ENCODE measurements at regions of chr1 and their contacts with region 1.

Region 1: DNA sequence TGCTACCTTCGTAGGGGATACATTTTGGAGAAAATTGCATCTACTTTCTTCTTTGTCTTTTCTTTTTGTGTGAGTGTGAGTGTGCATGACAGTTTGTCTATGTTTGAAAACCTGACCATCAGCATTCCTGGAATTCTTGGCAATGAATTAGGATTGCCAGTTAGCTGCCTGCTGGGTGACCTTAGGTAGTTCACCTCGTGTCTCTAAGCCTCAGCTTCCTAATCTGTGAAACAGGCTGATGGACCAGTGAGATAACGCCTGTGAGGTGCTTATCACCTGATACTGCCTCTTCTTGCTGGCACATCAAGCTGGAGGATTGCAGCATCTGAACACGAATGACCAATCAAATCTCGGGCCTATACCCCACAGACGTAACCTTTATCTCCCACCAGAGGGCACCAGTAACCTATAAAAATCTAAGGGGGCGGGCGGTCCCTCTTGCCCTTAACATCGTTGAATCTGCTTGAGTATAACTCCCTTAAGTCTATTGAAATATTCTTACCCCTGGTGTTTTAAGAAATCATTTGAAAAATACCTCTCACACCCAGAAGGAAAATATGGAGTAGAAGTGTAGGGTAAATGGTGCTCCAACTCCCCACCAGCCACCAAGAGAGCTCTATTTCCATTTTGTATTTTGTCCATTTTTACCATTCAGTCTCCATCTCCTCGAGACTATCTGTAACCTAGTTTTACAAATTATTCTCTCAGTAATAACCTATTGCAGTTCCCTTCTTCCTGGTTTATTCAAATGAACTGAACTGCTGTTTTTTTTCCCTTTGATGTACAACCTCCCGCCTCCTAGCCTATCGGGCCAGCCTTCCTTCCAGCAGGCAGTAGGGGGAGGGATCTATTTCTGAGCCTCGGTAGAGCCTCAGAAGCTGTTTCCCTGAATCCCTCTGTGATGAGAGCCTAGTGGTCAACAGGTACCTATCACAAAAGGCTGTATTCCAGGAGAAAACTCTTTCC is 49.7 kb downstream of the MDM4 start:
- DNase-seq: peak; percentile 31
- ATAC-seq: peak; percentile 80
- H3K4me3 Mint-ChIP-seq: peak overlapping the region; percentile 22
- H3K27ac Mint-ChIP-seq: peak overlapping the region; percentile 68
- H3K4me1 Mint-ChIP-seq: peaks cover 41% of the 10 kb centered on the region
- H3K27me3 Mint-ChIP-seq: no peaks in the 10 kb centered on the region
- CTCF ChIP-seq: peak; percentile 61

Region 2: DNA sequence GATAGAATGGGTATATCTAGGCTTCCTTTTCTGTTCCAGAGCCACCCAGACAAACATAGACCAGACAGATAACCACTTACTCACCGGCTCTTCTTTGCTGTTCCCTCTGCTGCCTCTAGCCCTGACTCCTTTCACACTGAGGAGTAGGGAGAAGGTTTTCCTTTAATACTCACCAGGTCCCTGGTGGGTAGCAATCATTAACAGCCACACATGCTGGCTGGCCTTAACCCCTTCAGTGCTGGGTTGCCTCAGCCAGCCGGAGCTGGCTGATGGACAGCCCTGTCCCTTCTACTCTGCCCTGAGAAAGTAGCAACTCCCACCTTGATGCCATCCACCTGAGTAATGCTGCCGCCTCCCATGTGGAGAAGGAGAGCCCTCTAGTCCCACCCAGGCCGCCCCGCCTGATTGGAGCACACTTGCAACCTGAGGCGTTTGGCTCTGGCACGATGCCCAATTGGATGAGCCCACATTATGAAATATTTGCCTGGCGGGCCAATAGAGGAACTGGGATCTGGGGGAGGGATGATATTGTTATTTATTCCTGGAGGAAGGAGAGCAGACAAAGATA is 277.8 kb before region 1 on chr1:
- CTCF ChIA-PET with region 1: no interaction called
- POLR2A ChIA-PET with region 1: no interaction called
- intact Hi-C with region 1: no loop called
- DNase-seq: no peak
- ATAC-seq: no peak
- H3K4me3 Mint-ChIP-seq: no peak overlapping the region
- H3K27ac Mint-ChIP-seq: peak overlapping the region; percentile 6
- H3K4me1 Mint-ChIP-seq: peaks cover 19% of the 10 kb centered on the region
- H3K27me3 Mint-ChIP-seq: peaks cover 8% of the 10 kb centered on the region
- CTCF ChIP-seq: no peak

Region 3: DNA sequence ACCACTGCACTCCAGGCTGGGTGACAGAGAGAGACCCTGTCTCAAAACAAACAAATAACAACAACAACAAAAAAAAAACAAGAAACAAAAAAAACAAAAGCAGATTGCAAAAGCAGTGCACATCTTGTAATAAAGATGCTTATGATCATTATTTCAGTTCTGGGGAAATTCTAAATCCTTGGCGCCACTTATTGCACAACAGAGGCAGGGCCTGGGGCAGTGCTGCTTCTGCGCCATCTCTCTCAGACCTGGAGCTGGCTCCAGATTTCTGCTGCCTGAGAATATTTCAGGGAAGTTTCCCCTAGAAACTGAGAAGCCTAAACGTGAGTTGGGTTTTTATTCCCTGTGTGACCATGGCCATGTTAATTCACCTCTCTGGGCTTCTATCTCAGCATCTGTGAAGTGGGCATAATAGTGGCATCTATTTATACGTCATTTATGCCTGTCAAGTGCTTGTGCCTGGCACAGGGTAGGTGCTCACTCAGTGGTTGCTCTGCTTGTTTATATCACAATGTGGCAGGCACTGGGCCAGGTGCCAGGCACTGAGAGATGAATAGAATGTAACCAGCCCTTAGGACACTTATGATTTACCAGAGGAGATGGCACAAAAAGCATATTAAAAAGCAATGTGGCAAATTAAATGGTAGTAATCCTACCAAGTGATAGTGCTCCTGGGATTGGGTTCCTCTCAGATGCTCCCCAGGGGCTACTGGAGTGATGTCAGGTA is 18.2 kb after region 1 on chr1:
- CTCF ChIA-PET with region 1: interaction called, 3 read pairs
- POLR2A ChIA-PET with region 1: interaction called, 4 read pairs
- intact Hi-C with region 1: loop called (anchors 2 kb)
- DNase-seq: no peak
- ATAC-seq: no peak
- H3K4me3 Mint-ChIP-seq: no peak overlapping the region
- H3K27ac Mint-ChIP-seq: no peak overlapping the region
- H3K4me1 Mint-ChIP-seq: peaks cover 54% of the 10 kb centered on the region
- H3K27me3 Mint-ChIP-seq: no peaks in the 10 kb centered on the region
- CTCF ChIP-seq: no peak

Region 4: DNA sequence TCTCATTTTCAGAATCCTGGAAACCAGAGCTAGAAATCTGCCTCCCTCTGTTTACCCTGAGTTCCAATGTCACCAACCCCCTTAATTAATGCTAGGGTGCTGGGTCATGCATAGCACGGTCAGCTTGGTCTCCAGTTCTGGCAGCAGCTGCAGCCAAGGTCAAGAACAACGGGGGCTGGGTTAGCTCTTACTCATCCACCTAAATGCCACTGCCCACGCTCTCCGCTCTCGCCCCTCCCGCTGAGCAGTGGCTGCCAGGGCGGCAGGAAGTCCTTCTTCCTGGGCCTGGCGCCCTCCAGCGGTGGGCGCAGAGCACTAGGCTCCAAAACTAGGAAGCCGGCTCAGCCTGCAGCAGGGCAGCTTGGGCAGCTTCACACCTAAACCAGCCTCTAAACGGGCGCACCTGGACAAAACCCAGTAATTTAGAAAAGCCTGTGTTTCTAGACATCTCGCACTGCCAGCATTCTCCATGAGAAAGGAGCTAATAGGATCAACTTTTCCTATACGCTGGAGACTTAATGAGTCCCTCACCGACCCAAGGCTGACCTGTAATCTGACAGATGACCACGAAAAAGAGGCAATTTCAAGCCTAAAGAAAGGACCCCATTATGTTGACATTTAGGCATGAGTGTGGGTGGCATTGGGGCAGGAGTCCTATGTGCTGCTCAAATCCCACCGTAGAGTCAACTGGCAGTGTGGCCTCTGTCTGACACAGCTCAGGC is 198.0 kb after region 1 on chr1:
- CTCF ChIA-PET with region 1: interaction called, 69 read pairs
- POLR2A ChIA-PET with region 1: interaction called, 4 read pairs
- intact Hi-C with region 1: loop called (anchors 1 kb)
- DNase-seq: peak; percentile 50
- ATAC-seq: peak; percentile 97
- H3K4me3 Mint-ChIP-seq: peak overlapping the region; percentile 3
- H3K27ac Mint-ChIP-seq: no peak overlapping the region
- H3K4me1 Mint-ChIP-seq: peaks cover 6% of the 10 kb centered on the region
- H3K27me3 Mint-ChIP-seq: peaks cover 29% of the 10 kb centered on the region
- CTCF ChIP-seq: peak; percentile 67